Calu3 (cell line): ENCODE measurements at regions of chr5 and their contacts with region 1.

Region 1: GRCh38 chr5:77630258-77631089 is 8.0 kb downstream of the OTP start:
- DNase-seq: peak; percentile 94
- H3K4me3 Mint-ChIP-seq: peak overlapping the region; percentile 92
- H3K27ac Mint-ChIP-seq: peak overlapping the region; percentile 74
- H3K4me1 Mint-ChIP-seq: peaks cover 21% of the 10 kb centered on the region
- H3K27me3 Mint-ChIP-seq: peaks cover 15% of the 10 kb centered on the region
- CTCF ChIP-seq: no peak

Region 2: GRCh38 chr5:77483682-77484081 is 146.8 kb before region 1 on chr5:
- CTCF ChIA-PET with region 1: no interaction called
- intact Hi-C with region 1: no loop called
- DNase-seq: no peak
- H3K4me3 Mint-ChIP-seq: no peak overlapping the region
- H3K27ac Mint-ChIP-seq: no peak overlapping the region
- H3K4me1 Mint-ChIP-seq: no peaks in the 10 kb centered on the region
- H3K27me3 Mint-ChIP-seq: no peaks in the 10 kb centered on the region
- CTCF ChIP-seq: no peak

Region 3: DNA sequence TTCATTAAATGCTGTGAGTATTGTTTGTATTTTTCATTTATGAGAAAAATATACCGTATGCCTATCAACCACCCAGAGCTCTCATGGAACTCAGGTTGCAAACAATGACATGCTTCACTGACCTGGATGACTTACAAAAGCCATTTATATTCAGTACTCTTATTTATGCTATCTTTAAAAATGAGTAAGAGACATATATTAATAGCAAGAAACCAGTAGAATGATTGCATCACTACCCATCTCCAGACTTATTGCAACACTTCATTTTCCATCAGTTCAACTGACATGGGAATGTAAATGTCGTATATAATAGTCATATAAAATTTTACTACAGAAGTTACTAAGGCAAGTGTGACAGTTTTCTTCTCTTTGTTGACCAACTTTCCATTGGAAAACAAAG is 61.1 kb before region 1 on chr5:
- CTCF ChIA-PET with region 1: no interaction called
- intact Hi-C with region 1: loop called (anchors 5 kb)
- DNase-seq: no peak
- H3K4me3 Mint-ChIP-seq: no peak overlapping the region
- H3K27ac Mint-ChIP-seq: no peak overlapping the region
- H3K4me1 Mint-ChIP-seq: no peaks in the 10 kb centered on the region
- H3K27me3 Mint-ChIP-seq: no peaks in the 10 kb centered on the region
- CTCF ChIP-seq: no peak

Region 4: DNA sequence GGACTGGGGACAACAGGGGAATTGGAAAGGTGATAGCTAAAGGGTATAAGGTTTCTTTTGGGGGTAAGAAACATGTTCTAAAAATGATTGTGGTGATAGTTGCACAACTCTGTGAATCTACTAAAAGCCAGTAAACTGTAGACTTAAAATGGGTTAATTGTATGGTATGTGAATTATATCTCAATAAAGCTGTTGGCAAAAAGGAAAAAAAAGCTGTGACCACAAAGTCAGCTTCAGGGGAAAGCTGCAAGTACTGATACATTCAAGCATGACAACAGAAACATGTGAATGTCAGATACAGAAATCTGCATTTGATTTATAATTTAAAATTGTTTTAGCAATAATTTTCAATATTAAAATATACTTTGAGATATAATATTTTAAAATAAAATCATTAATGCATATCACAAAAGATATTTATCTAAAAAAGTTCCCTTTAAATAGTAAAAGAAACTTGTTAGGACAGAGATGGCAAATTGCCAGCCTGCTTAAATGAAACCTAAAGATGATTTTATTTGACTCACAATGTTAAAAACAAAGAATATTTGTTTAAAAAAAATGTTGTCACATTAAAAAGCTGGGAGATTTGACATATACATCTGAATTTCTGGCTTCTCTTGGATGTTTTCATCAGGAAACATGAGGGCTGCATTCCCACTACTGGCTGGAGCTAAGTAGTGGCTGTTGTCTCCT is 79.7 kb after region 1 on chr5:
- CTCF ChIA-PET with region 1: interaction called, 10 read pairs
- intact Hi-C with region 1: no loop called
- DNase-seq: no peak
- H3K4me3 Mint-ChIP-seq: no peak overlapping the region
- H3K27ac Mint-ChIP-seq: no peak overlapping the region
- H3K4me1 Mint-ChIP-seq: peaks cover 7% of the 10 kb centered on the region
- H3K27me3 Mint-ChIP-seq: no peaks in the 10 kb centered on the region
- CTCF ChIP-seq: no peak